CD4-positive, alpha-beta memory T cell (primary cell): ENCODE measurements at regions of chr19 and their contacts with region 1.

Region 1: GRCh38 chr19:16076154-16076957 is at the start of gene TPM4:
- DNase-seq: peak; percentile 74 to 89 (median 76)
- H3K4me3 ChIP-seq: peak within 1 kb of the TSS; percentile 55 to 85
- H3K4me3 Mint-ChIP-seq: peak within 1 kb of the TSS; percentile 83 to 92 (median 91)
- H3K27ac ChIP-seq: peak within 1 kb of the TSS; percentile 91
- H3K27ac Mint-ChIP-seq: peak within 1 kb of the TSS; percentile 91 to 100 (median 99)
- H3K4me1 ChIP-seq: peaks cover 78% of the 10 kb centered on the region
- H3K4me1 Mint-ChIP-seq: peaks cover 42 to 83% (median 59%) of the 10 kb centered on the region in 4 donors
- H3K27me3 ChIP-seq: no peaks in the 10 kb centered on the region
- H3K27me3 Mint-ChIP-seq: no peaks in the 10 kb centered on the region
- total RNA-seq, gene TPM4: 94.7 to 96.8 TPM

Region 2: GRCh38 chr19:15629003-15629880 is 447.1 kb before region 1 on chr19:
- CTCF ChIA-PET with region 1: no interaction called
- POLR2A ChIA-PET with region 1: no interaction called
- intact Hi-C with region 1: loop called (anchors 1 kb)
- DNase-seq: peak; percentile 80 to 86 (median 81)
- H3K4me3 ChIP-seq: no peak overlapping the region
- H3K4me3 Mint-ChIP-seq: no peak overlapping the region
- H3K27ac ChIP-seq: no peak overlapping the region
- H3K27ac Mint-ChIP-seq: no peak overlapping the region
- H3K4me1 ChIP-seq: peaks cover 14% of the 10 kb centered on the region
- H3K4me1 Mint-ChIP-seq: peaks cover 2 to 13% (median 9%) of the 10 kb centered on the region in 4 donors
- H3K27me3 ChIP-seq: no peaks in the 10 kb centered on the region
- H3K27me3 Mint-ChIP-seq: peaks cover 3 to 14% of the 10 kb centered on the region in 2 donors

Region 3: GRCh38 chr19:15836595-15837337 is 239.6 kb before region 1 on chr19:
- CTCF ChIA-PET with region 1: no interaction called
- POLR2A ChIA-PET with region 1: interaction called, 13 read pairs
- intact Hi-C with region 1: loop called (anchors 5 kb)
- DNase-seq: peak; percentile 95 to 98 (median 96)
- H3K4me3 ChIP-seq: peak overlapping the region; percentile 63 to 69
- H3K4me3 Mint-ChIP-seq: peak overlapping the region; percentile 92 to 99 (median 96)
- H3K27ac ChIP-seq: peak overlapping the region; percentile 94
- H3K27ac Mint-ChIP-seq: peak overlapping the region; percentile 89 to 100 (median 98)
- H3K4me1 ChIP-seq: peaks cover 29% of the 10 kb centered on the region
- H3K4me1 Mint-ChIP-seq: peaks cover 17 to 36% (median 26%) of the 10 kb centered on the region in 4 donors
- H3K27me3 ChIP-seq: no peaks in the 10 kb centered on the region
- H3K27me3 Mint-ChIP-seq: no peaks in the 10 kb centered on the region

Region 4: GRCh38 chr19:15976836-15977689 is 99.3 kb before region 1 on chr19:
- CTCF ChIA-PET with region 1: no interaction called
- POLR2A ChIA-PET with region 1: no interaction called
- intact Hi-C with region 1: no loop called
- DNase-seq: no peak
- H3K4me3 ChIP-seq: no peak overlapping the region
- H3K4me3 Mint-ChIP-seq: no peak overlapping the region
- H3K27ac ChIP-seq: no peak overlapping the region
- H3K27ac Mint-ChIP-seq: no peak overlapping the region
- H3K4me1 ChIP-seq: no peaks in the 10 kb centered on the region
- H3K4me1 Mint-ChIP-seq: no peaks in the 10 kb centered on the region
- H3K27me3 ChIP-seq: peaks cover 15% of the 10 kb centered on the region
- H3K27me3 Mint-ChIP-seq: peaks cover 32 to 36% of the 10 kb centered on the region in 2 donors

Region 5: GRCh38 chr19:16088351-16089009 is 12.1 kb after region 1 on chr19:
- CTCF ChIA-PET with region 1: interaction called, 145 read pairs
- POLR2A ChIA-PET with region 1: interaction called, 192 read pairs
- intact Hi-C with region 1: loop called (anchors 1 kb)
- DNase-seq: peak in 1 of 5 donors; percentile 10
- H3K4me3 ChIP-seq: no peak overlapping the region
- H3K4me3 Mint-ChIP-seq: peak overlapping the region in 4 of 8 donors; percentile 15 to 54 (median 34)
- H3K27ac ChIP-seq: no peak overlapping the region
- H3K27ac Mint-ChIP-seq: peak overlapping the region; percentile 61 to 82 (median 72)
- H3K4me1 ChIP-seq: peaks cover 53% of the 10 kb centered on the region
- H3K4me1 Mint-ChIP-seq: peaks cover 27 to 58% (median 36%) of the 10 kb centered on the region in 4 donors
- H3K27me3 ChIP-seq: no peaks in the 10 kb centered on the region
- H3K27me3 Mint-ChIP-seq: no peaks in the 10 kb centered on the region